Mammary epithelial cell (primary cell): ENCODE measurements at regions of chr5 and their contacts with region 1.

Region 1: DNA sequence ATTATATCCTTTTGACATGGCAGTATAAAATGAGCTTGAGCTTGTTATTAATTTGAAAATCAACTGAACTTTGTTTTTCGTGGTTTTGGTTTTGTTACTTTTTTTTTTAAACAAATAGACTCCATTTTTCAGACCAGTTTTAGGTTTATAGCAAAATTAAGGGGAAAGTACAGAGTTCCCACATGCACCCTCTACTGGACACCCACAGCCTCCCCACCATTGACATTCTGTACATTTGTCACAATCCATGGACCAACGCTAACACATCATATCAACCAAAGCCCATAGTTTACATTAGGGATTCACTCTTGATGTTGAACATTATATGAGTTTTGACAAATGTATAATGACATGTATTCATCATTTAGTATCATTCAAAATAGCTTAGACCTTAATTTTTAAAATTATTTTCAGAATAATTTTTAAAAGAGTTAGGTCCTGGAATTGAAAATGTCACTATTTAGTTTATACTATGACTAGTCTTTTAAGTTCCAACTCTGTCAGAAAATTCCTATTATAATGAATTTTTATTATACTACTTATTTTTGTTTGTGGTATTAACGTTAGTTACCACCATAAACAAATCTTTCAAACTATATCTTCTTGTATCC is 35.3 kb upstream of the JMY start:
- DNase-seq: no peak
- H3K4me3 ChIP-seq: no peak overlapping the region
- H3K27ac ChIP-seq: no peak overlapping the region
- H3K4me1 ChIP-seq: no peaks in the 10 kb centered on the region
- H3K27me3 ChIP-seq: no peaks in the 10 kb centered on the region
- CTCF ChIP-seq: peak; percentile 45 to 46

Region 2: GRCh38 chr5:79229357-79230174 is 28.9 kb after region 1 on chr5:
- CTCF ChIA-PET with region 1: interaction called, 10 read pairs
- dilution Hi-C with region 1: no loop called
- in situ Hi-C with region 1: no loop called
- intact Hi-C with region 1: no loop called
- DNase-seq: peak; percentile 90
- H3K4me3 ChIP-seq: no peak overlapping the region
- H3K27ac ChIP-seq: peak overlapping the region; percentile 37
- H3K4me1 ChIP-seq: peaks cover 13% of the 10 kb centered on the region
- H3K27me3 ChIP-seq: no peaks in the 10 kb centered on the region
- CTCF ChIP-seq: no peak

Region 3: DNA sequence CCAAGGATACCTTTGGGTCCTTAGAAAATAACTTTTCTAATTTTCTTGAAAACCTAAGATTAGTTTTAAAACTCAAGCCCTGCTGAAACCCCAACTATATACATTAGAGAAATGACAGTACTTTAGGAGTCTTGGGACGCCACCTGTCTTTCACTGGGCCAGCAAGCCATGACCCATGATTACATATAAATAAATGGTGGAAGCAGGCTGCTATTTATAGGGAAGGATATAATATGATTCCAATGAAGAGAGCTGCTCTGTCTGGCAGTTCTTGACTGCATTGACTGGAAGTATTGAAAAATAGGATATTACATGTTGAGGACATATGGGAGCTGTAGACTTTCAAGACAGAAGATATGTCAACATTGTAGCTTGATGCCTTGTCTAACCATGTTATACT is 42.5 kb after region 1 on chr5:
- CTCF ChIA-PET with region 1: no interaction called
- dilution Hi-C with region 1: no loop called
- in situ Hi-C with region 1: no loop called
- intact Hi-C with region 1: no loop called
- DNase-seq: no peak
- H3K4me3 ChIP-seq: no peak overlapping the region
- H3K27ac ChIP-seq: no peak overlapping the region
- H3K4me1 ChIP-seq: no peaks in the 10 kb centered on the region
- H3K27me3 ChIP-seq: no peaks in the 10 kb centered on the region
- CTCF ChIP-seq: no peak